ENCODE measurements at regions of chr7 and their contacts with region 1.

Region 1: GRCh38 chr7:157690833-157691585 is 354.2 kb downstream of the DNAJB6 start:
- DNase-seq: no peak
- H3K4me3 Mint-ChIP-seq: peak overlapping the region; percentile 39
- H3K27ac Mint-ChIP-seq: peak overlapping the region; percentile 61
- H3K4me1 Mint-ChIP-seq: no peaks in the 10 kb centered on the region
- H3K27me3 Mint-ChIP-seq: peaks cover 56% of the 10 kb centered on the region

Region 2: DNA sequence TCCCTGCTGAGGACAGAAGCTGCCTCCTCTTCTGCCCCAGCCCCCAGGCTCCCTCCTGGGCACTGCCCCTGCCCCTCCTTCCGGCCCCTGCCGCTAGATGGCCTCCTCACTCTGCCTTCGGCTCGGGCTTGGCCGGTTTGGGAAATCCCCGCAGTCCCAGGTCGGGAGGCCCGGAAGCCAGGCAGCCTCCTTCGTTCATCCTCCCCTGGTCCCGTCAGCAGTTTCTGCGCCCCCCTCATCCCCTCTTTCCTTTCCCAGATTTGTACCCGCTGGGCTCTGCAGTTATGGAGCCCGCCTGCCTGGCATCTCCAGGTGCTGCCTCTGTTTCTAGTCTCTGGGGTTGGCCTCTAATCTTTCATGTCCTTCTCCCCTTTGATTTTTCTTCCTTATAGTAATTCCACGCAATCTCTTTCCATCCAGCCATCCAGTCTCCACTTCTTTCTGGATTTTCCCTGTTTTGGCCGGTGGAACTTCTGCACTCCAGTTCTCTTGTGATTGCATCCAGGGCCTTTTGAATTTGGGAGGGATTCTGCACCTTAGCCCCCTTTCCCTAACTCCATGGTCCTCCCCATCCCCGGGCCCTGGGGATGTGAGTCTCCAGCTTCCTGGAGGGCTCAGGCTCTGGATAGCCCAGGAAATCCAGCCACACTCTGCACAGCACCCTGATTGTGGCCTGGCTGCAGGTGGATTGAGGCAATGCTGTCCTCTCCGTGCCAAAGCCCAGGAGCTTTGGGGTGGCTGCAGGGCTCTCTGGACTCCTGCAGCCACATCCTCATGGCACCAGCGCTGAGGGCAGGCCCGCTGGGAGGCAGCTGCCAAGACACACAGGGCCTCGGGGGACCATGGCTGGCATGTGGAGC is 1875.4 kb before region 1 on chr7:
- intact Hi-C with region 1: loop called (anchors 5 kb)
- DNase-seq: peak; percentile 66
- H3K4me3 Mint-ChIP-seq: no peak overlapping the region
- H3K27ac Mint-ChIP-seq: peak overlapping the region; percentile 67
- H3K4me1 Mint-ChIP-seq: peaks cover 21% of the 10 kb centered on the region
- H3K27me3 Mint-ChIP-seq: peaks cover 47% of the 10 kb centered on the region

Region 3: DNA sequence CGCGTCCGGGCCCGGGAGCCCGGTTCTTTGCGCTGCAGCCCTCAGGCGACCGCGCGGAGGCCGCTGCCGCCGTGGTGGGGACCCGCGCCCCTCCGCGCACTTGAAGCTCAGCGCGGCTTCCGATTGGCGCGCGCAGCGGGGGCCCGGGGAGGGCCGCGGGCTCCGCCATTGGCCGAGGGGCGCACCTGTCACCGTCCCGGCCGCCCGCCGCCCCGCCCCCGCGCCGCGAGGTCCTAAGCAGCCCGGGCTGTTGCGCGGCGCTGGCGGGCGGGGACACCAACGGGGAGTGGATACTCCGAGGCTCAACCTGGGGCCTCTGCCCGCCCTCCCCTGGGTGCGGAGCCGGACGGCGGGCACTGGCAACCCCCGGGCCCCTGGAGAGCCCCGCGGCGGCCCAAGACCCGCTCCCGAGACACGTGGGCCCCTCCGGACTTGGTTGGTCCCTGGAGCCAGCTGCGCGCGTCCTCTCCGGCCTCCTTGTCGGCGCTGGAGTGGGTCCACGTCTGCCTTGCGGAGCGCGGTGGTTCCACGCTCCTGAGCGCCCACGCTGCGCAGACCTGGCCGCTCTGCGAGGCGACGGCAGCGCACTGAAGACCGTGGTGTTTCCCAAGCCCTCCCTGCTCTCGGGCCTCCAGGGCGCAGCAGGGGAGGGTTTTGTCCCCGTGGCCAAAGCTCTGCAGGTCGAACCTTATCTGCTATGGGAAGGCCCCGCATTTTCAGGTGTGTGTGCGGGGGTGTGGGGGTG is 680.2 kb before region 1 on chr7 and contains the start of gene MNX1:
- intact Hi-C with region 1: loop called (anchors 2 kb)
- DNase-seq: peak; percentile 30
- H3K4me3 Mint-ChIP-seq: peak within 1 kb of the TSS; percentile 37
- H3K27ac Mint-ChIP-seq: peak within 1 kb of the TSS; percentile 51
- H3K4me1 Mint-ChIP-seq: peaks cover under 1% of the 10 kb centered on the region
- H3K27me3 Mint-ChIP-seq: peaks cover 79% of the 10 kb centered on the region
- total RNA-seq, gene MNX1: not detected in 2 replicates

Region 4: DNA sequence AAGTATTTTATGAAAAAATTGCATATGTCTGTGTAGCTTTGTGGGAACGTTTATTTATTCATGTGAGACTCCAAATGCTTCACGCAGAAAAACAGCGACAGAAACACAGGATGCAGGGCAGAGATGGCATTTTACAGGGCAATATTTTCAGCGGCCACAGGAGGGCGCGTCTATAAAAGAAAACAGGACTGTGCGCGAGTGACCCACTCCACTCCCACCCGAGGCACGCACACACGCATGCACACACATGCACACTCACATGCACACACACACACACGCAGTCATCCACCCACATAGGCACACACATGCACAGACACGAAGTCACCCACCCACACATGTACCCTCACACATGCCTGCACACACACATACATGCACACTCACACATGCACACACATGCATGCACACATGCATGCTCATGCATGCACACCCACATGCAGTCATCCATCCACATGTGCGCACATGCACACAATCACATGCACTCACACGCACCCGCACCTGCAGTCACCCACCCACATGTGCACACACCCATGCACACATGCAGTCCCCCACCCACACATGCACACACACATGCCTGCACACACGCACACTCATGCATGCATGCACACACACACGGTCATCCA is 257.9 kb before region 1 on chr7:
- intact Hi-C with region 1: loop called (anchors 5 kb)
- DNase-seq: peak; percentile 49
- H3K4me3 Mint-ChIP-seq: peak overlapping the region; percentile 66
- H3K27ac Mint-ChIP-seq: peak overlapping the region; percentile 43
- H3K4me1 Mint-ChIP-seq: peaks cover 13% of the 10 kb centered on the region
- H3K27me3 Mint-ChIP-seq: peaks cover 7% of the 10 kb centered on the region